ENCODE measurements at regions of chr20 and their contacts with region 1.

Region 1: GRCh38 chr20:50790651-50791277 is 4.1 kb upstream of the BCAS4 start:
- DNase-seq: peak; percentile 89
- H3K4me3 Mint-ChIP-seq: peak overlapping the region; percentile 21
- H3K27ac Mint-ChIP-seq: peak overlapping the region; percentile 40
- H3K4me1 Mint-ChIP-seq: peaks cover 11% of the 10 kb centered on the region
- H3K27me3 Mint-ChIP-seq: no peaks in the 10 kb centered on the region

Region 2: GRCh38 chr20:50750145-50750671 is 40.6 kb before region 1 on chr20:
- CTCF ChIA-PET with region 1: interaction called, 10 read pairs
- intact Hi-C with region 1: no loop called
- DNase-seq: no peak
- H3K4me3 Mint-ChIP-seq: no peak overlapping the region
- H3K27ac Mint-ChIP-seq: no peak overlapping the region
- H3K4me1 Mint-ChIP-seq: peaks cover 26% of the 10 kb centered on the region
- H3K27me3 Mint-ChIP-seq: no peaks in the 10 kb centered on the region

Region 3: DNA sequence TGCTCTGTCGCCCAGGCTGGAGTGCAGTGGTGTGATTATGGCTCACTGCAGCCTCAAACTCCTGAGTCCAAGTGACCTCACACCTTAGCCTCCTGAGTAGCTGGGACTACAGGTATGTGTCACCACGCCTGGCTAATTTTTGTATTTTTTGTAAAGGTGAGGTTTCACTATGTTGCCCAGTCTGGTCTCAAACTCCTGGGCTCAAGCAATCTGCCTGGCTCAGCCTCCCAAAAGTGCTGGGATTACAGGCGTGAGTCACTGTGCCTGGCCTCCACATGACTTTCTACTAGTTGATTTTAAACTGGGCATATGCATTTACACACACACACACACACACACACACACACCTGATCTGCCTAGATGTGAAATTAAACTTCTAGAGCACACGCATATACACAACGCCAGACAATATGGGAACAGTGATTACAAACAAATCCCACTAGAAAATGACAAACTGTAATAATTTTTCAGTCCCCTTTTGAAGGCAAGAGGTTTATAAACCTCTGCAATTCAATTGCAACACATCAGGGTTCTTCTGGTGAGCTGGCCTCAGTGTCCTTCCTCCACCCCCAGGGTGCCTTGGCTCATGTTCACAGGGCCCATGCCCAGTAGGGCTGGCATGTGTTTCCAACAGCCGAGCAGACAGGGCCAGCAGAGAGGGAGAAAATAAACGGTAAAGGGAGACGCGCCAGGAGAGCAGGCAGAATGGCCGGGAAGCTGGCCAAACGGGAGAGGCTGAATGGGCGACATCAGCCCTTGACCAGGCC is 28.1 kb before region 1 on chr20:
- CTCF ChIA-PET with region 1: no interaction called
- intact Hi-C with region 1: no loop called
- DNase-seq: no peak
- H3K4me3 Mint-ChIP-seq: no peak overlapping the region
- H3K27ac Mint-ChIP-seq: no peak overlapping the region
- H3K4me1 Mint-ChIP-seq: no peaks in the 10 kb centered on the region
- H3K27me3 Mint-ChIP-seq: no peaks in the 10 kb centered on the region

Region 4: GRCh38 chr20:50815162-50815989 is 24.6 kb after region 1 on chr20:
- CTCF ChIA-PET with region 1: interaction called, 19 read pairs
- intact Hi-C with region 1: loop called (anchors 1 kb)
- DNase-seq: peak; percentile 45
- H3K4me3 Mint-ChIP-seq: peak overlapping the region; percentile 59
- H3K27ac Mint-ChIP-seq: peak overlapping the region; percentile 83
- H3K4me1 Mint-ChIP-seq: peaks cover 54% of the 10 kb centered on the region
- H3K27me3 Mint-ChIP-seq: no peaks in the 10 kb centered on the region

Region 5: GRCh38 chr20:50943069-50943468 is 152.3 kb after region 1 on chr20:
- CTCF ChIA-PET with region 1: interaction called, 12 read pairs
- intact Hi-C with region 1: no loop called
- DNase-seq: no peak
- H3K4me3 Mint-ChIP-seq: no peak overlapping the region
- H3K27ac Mint-ChIP-seq: no peak overlapping the region
- H3K4me1 Mint-ChIP-seq: no peaks in the 10 kb centered on the region
- H3K27me3 Mint-ChIP-seq: no peaks in the 10 kb centered on the region

Region 6: DNA sequence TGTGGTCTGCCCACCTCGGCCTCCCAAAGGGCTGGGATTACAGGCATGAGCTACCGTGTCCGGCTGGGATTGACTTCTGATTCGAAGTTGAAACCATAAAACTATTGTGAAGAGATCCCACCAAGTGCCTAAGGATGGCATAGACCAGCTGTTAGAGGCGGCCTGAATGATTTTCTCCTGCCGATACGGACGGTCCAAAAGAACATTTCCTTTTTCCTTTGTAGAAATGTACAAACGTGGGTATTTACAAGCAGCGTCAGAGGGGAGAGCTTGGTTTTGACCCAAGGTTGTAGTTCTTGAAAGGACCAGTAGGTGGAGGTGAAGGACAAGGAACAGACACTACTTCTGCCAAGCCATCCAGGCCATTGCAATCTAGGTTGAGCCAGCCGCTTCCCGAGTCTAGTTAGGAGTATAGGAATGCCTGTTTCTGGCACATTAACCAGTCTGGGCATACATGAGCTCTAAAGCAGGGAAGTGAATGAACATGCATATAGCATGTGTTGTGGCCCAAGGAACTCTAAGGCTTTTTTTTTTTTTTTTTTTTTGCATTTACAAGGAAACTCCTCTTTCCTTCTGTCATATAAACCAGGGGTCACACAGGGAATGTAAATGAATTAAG is 196.9 kb after region 1 on chr20:
- CTCF ChIA-PET with region 1: interaction called, 20 read pairs
- intact Hi-C with region 1: no loop called
- DNase-seq: peak; percentile 78
- H3K4me3 Mint-ChIP-seq: no peak overlapping the region
- H3K27ac Mint-ChIP-seq: no peak overlapping the region
- H3K4me1 Mint-ChIP-seq: no peaks in the 10 kb centered on the region
- H3K27me3 Mint-ChIP-seq: peaks cover 23% of the 10 kb centered on the region

Measured in activated naive CD4-positive, alpha-beta T cell treated with anti-CD3 and anti-CD28 coated beads for 36 hours (primary cell).